GM13977 (cell line): ENCODE measurements at regions of chr18 and their contacts with region 1.

Region 1: DNA sequence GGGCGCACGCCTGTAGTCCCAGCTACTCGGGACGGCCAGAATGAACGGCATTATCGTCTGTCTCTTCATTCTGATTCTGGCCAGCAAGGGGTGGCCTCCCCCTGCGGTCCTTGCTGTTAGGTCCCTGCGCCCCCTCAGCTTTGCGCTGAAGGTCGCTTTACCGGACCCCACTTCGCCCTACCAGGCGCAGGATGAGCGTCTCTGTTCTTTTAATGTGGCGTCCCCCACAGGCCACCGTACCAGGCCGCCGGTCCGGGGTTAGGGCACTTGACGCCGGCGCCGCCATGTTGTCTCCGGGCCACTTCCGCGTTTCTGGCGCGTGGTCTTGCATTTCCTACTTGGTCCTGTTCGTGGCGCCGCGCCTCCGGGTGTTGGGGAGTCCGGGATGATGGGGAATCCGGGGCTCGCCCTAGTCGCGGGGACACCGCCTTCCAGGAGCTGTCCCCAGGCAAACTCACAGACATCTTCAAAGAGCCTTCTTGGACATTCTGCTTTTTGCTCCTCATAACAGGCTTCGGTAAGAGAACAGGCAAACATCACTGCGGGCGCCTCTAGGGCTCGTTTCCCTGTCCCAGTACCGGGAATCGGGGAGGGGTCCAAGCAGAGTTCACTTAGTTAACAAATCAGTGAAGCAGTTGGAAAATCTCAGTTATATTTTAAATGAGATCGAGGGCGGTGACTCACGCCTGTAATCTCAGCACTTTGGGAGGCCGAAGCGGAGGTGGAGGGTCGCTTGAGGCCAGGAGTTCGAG is 8.5 kb upstream of the NARS1 start:
- DNase-seq: peak; percentile 90
- CTCF ChIP-seq: peak; percentile 92

Region 2: GRCh38 chr18:57523171-57523956 is 106.8 kb before region 1 on chr18:
- in situ Hi-C with region 1: no loop called
- DNase-seq: peak; percentile 22
- CTCF ChIP-seq: no peak

Region 3: DNA sequence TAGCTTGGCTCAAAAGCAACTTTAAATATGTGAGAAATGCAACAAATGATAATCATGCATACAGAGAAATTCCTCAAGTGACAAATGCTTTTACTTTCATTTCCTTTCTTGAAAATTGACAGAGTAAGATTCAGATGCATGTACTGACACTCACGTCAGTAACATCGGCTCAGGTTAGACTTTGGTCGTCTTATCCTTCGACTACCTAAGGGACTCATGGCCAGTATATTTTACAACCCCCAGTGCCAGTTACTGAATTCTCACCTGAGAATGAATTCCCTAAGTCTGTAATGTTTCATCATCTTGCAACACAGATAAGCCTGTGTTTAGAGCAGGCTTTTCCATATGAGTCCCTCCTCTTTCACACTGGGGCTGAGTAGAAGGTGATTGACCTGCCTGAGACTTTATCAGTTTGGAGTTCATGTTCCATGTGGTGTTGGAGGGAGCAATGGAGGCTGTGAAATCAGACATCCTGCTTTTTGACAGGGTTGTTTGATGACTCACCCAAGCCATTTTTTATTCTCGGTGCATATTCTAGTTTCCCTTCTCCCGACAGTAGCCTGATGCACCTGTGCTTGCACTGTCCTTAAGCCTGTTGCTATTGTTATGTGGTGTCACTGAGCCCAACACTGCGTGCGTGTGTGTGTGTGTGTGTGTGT is 203.4 kb after region 1 on chr18:
- in situ Hi-C with region 1: loop called (anchors 25 kb)
- DNase-seq: peak; percentile 40
- CTCF ChIP-seq: no peak

Region 4: GRCh38 chr18:58180738-58181353 is 550.7 kb after region 1 on chr18:
- in situ Hi-C with region 1: no loop called
- DNase-seq: peak; percentile 77
- CTCF ChIP-seq: peak; percentile 74